ENCODE measurements at regions of chr1 and their contacts with region 1.

Region 1: DNA sequence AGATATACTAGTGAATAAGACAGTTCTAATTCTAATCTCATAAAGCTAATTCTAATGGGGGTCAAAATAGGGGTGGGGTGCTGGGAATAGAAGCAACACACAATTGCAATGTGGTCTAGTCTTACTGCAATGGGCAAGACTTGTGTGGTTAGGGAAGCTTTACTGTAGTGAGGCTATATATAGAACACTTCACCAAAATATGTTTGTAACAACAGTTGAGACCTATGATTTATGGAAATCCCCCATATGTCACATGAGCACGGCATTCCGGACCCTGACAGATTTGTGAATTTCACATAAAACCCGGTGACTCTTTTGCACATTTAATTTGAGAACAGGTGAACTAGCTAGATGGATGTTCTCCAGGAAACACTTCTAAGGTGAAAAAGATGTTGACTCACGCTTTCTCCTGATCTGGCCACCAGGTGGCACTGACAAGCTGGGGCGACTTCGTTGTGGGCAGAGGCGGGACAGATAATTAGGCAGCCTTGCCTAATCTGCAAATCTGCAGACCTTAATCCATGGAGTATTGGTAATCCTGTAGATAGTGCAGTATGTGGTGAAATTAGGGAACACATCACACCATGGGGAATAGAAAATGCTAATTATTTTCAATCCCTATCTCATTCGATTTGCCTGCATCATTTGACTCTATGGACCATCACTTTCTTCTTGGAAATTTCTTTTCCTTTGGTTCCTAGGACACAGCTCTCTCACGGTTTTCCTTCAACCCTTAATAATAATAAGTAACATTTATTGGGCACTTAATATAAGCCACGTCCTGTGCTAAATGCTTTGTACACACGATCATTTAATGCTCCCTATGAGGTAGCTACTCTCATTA is 37.7 kb downstream of the KIAA0040 start:
- DNase-seq: peak; percentile 84
- H3K4me3 Mint-ChIP-seq: no peak overlapping the region
- H3K27ac Mint-ChIP-seq: no peak overlapping the region
- H3K4me1 Mint-ChIP-seq: peaks cover 12% of the 10 kb centered on the region
- H3K27me3 Mint-ChIP-seq: peaks cover 41% of the 10 kb centered on the region

Region 2: GRCh38 chr1:175062858-175063257 is 92.0 kb before region 1 on chr1:
- CTCF ChIA-PET with region 1: no interaction called
- DNase-seq: no peak
- H3K4me3 Mint-ChIP-seq: no peak overlapping the region
- H3K27ac Mint-ChIP-seq: no peak overlapping the region
- H3K4me1 Mint-ChIP-seq: no peaks in the 10 kb centered on the region
- H3K27me3 Mint-ChIP-seq: peaks cover 25% of the 10 kb centered on the region

Region 3: DNA sequence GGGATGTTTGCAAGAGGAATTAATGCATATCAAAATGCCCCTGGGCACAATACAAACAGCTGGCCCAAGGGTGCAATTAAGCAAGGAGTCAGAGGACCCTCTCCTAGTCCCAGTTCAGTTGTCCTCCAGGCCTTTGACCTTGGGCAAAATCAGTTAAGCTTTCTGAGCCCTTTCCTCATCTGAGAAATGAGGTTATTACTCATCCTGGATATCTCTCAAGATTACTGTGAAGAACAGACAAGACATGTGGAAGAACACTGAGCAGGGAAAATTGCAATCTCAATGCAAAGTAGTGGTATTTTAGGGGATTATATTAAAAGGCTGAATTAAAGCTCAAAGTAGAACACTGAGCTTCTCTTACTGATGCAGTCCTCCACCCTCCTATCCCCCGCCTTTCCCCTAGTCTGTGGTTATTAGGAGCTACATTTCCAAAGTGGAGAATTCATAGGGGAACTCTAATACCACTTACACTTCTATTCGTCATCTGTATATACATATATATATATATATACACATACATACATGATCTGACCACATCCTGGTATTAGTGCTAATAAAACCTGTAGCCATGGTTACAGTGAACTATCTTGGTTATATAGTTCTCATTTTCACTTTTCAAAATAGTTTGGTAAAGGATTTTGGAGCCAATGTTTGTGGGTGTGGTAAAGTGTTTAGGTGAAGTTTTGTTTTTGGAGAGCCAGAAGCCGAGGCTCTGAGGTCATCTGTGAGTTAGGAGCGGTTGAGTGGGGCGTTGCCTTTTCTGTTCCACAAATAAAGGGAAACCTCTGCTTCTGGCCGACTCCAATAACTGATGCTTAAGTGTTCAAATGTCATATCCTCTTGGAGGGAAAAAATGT is 19.7 kb after region 1 on chr1:
- CTCF ChIA-PET with region 1: interaction called, 11 read pairs
- DNase-seq: no peak
- H3K4me3 Mint-ChIP-seq: no peak overlapping the region
- H3K27ac Mint-ChIP-seq: peak overlapping the region; percentile 50
- H3K4me1 Mint-ChIP-seq: peaks cover 51% of the 10 kb centered on the region
- H3K27me3 Mint-ChIP-seq: no peaks in the 10 kb centered on the region

Region 4: GRCh38 chr1:175192630-175193526 is 38.0 kb after region 1 on chr1 and contains the start of gene KIAA0040:
- CTCF ChIA-PET with region 1: interaction called, 15 read pairs
- DNase-seq: peak; percentile 69
- H3K4me3 Mint-ChIP-seq: peak within 1 kb of the TSS; percentile 93
- H3K27ac Mint-ChIP-seq: peak within 1 kb of the TSS; percentile 91
- H3K4me1 Mint-ChIP-seq: peaks cover 76% of the 10 kb centered on the region
- H3K27me3 Mint-ChIP-seq: no peaks in the 10 kb centered on the region

Region 5: GRCh38 chr1:175307160-175307559 is 152.3 kb after region 1 on chr1:
- CTCF ChIA-PET with region 1: interaction called, 293 read pairs
- DNase-seq: no peak
- H3K4me3 Mint-ChIP-seq: no peak overlapping the region
- H3K27ac Mint-ChIP-seq: no peak overlapping the region
- H3K4me1 Mint-ChIP-seq: no peaks in the 10 kb centered on the region
- H3K27me3 Mint-ChIP-seq: peaks cover 57% of the 10 kb centered on the region

Region 6: GRCh38 chr1:175319418-175320230 is 164.8 kb after region 1 on chr1:
- CTCF ChIA-PET with region 1: interaction called, 293 read pairs
- DNase-seq: peak; percentile 78
- H3K4me3 Mint-ChIP-seq: no peak overlapping the region
- H3K27ac Mint-ChIP-seq: no peak overlapping the region
- H3K4me1 Mint-ChIP-seq: peaks cover 9% of the 10 kb centered on the region
- H3K27me3 Mint-ChIP-seq: peaks cover 49% of the 10 kb centered on the region

Region 7: GRCh38 chr1:175434283-175434860 is 279.5 kb after region 1 on chr1:
- CTCF ChIA-PET with region 1: interaction called, 13 read pairs
- DNase-seq: peak; percentile 30
- H3K4me3 Mint-ChIP-seq: no peak overlapping the region
- H3K27ac Mint-ChIP-seq: no peak overlapping the region
- H3K4me1 Mint-ChIP-seq: no peaks in the 10 kb centered on the region
- H3K27me3 Mint-ChIP-seq: peaks cover 8% of the 10 kb centered on the region

Region 8: GRCh38 chr1:176058686-176059085 is 903.8 kb after region 1 on chr1:
- CTCF ChIA-PET with region 1: no interaction called
- DNase-seq: no peak
- H3K4me3 Mint-ChIP-seq: no peak overlapping the region
- H3K27ac Mint-ChIP-seq: no peak overlapping the region
- H3K4me1 Mint-ChIP-seq: no peaks in the 10 kb centered on the region
- H3K27me3 Mint-ChIP-seq: no peaks in the 10 kb centered on the region

Measured in activated naive CD4-positive, alpha-beta T cell treated with anti-CD3 and anti-CD28 coated beads, Interleukin-2, amount 10 ng/mL, durations not matched to agents 7 days and 5 days (primary cell).